Activated B cell treated with CpG ODN at 0.5 μM for 24 hours (primary cell): ENCODE measurements at regions of chr1 and their contacts with region 1.

Region 1: GRCh38 chr1:42924082-42924850 is 34.4 kb downstream of the SLC2A1 start:
- DNase-seq: peak; percentile 95
- ATAC-seq: peak; percentile 87
- H3K4me3 Mint-ChIP-seq: peak overlapping the region; percentile 91
- H3K27ac Mint-ChIP-seq: peak overlapping the region; percentile 92
- H3K4me1 Mint-ChIP-seq: peaks cover 41% of the 10 kb centered on the region
- H3K27me3 Mint-ChIP-seq: no peaks in the 10 kb centered on the region
- CTCF ChIP-seq: no peak

Region 2: DNA sequence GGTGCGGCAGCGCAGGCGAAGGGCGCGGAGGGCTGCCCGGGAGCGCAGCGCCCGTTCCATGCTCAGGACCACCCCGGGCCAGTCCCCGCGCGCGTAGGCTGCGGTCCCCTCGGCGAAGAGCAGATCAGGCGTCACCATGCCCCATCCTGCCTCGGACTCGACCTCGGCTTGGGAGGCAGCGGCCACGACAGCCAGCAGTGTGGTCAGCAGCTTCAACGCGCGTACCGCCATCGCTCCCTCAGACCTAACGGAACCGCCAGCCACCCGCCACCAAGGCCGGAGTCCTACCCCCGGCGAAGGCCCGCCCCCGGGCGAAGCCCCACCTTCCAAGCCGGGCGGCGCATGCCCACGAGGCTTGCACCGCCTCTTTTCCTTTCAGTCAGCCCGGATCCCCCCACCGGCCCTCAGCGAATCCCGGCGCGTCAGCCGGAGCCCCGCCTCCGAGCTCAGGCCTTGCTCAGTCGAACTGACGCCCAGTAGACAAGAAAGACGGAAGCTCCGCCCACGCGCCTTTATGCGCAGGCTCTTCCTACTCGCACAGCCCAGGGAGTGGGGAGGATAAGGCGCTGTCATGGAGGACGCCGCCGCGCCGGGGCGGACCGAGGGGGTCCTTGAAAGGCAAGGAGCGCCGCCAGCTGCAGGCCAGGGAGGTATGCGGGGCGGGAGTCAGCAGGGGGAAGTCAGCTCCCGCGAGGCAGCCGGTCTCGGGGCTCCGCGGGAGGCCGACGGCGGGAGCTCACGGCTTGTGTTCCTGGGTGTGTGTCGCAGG is 157.3 kb before region 1 on chr1 and contains the starts of genes C1orf50 and P3H1:
- CTCF ChIA-PET with region 1: interaction called, 4 read pairs
- POLR2A ChIA-PET with region 1: interaction called, 9 read pairs
- intact Hi-C with region 1: loop called (anchors 1 kb)
- DNase-seq: peak; percentile 99
- ATAC-seq: peak; percentile 91
- H3K4me3 Mint-ChIP-seq: no peak within 1 kb of the TSS
- H3K27ac Mint-ChIP-seq: peak within 1 kb of the TSS; percentile 93
- H3K4me1 Mint-ChIP-seq: peaks cover 33% of the 10 kb centered on the region
- H3K27me3 Mint-ChIP-seq: no peaks in the 10 kb centered on the region
- CTCF ChIP-seq: no peak
- total RNA-seq, gene C1orf50: 10.6 and 13.1 TPM in 2 replicates
- total RNA-seq, gene P3H1: 27.1 and 30.4 TPM in 2 replicates

Region 3: GRCh38 chr1:42846257-42847110 is 77.8 kb before region 1 on chr1 and contains the start of gene ZNF691:
- CTCF ChIA-PET with region 1: interaction called, 4 read pairs
- POLR2A ChIA-PET with region 1: interaction called, 12 read pairs
- intact Hi-C with region 1: loop called (anchors 5 kb)
- DNase-seq: peak; percentile 63
- ATAC-seq: peak; percentile 97
- H3K4me3 Mint-ChIP-seq: peak within 1 kb of the TSS; percentile 94
- H3K27ac Mint-ChIP-seq: peak within 1 kb of the TSS; percentile 83
- H3K4me1 Mint-ChIP-seq: peaks cover 43% of the 10 kb centered on the region
- H3K27me3 Mint-ChIP-seq: no peaks in the 10 kb centered on the region
- CTCF ChIP-seq: no peak
- total RNA-seq, gene ZNF691: 13.1 and 16.1 TPM in 2 replicates

Region 4: GRCh38 chr1:42936309-42937078 is 12.2 kb after region 1 on chr1:
- CTCF ChIA-PET with region 1: interaction called, 46 read pairs
- POLR2A ChIA-PET with region 1: interaction called, 442 read pairs
- intact Hi-C with region 1: loop called (anchors 1 kb)
- DNase-seq: peak; percentile 19
- ATAC-seq: no peak
- H3K4me3 Mint-ChIP-seq: peak overlapping the region; percentile 67
- H3K27ac Mint-ChIP-seq: peak overlapping the region; percentile 91
- H3K4me1 Mint-ChIP-seq: peaks cover 100% of the 10 kb centered on the region
- H3K27me3 Mint-ChIP-seq: no peaks in the 10 kb centered on the region
- CTCF ChIP-seq: no peak

Region 5: DNA sequence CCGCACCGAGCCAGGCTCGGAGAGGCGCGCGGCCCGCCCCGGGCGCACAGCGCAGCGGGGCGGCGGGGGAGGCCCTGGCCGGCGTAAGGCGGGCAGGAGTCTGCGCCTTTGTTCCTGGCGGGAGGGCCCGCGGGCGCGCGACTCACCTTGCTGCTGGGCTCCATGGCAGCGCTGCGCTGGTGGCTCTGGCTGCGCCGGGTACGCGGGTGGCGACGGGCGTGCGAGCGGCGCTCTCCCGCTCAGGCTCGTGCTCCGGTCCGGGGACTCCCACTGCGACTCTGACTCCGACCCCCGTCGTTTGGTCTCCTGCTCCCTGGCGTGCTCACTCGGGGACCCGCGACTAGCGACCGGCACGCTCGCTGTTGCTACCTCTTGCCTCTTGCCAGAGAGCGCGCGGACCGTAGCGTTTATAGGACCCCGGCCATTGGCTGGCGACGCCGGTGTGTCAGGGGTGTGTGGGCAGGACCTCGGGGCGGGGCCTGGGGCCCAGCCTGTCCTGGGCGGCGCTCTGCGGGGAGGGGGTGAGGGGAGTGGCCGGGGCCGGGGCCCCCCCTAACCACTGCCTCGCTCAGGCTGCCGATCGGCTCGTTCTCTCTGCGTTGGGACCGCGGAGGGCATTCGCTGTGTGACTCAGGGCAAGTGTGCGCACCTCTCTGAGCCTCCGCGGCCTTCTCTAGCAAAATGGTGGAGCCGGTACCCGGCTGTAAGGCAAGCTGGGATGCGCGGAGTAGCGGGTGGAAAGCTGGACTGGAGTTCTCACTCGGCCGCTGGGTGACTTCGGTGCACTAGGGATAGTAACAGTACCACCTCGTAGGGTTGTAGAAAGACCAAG is 34.4 kb after region 1 on chr1 and contains the start of gene SLC2A1:
- CTCF ChIA-PET with region 1: interaction called, 7 read pairs
- POLR2A ChIA-PET with region 1: interaction called, 442 read pairs
- intact Hi-C with region 1: loop called (anchors 1 kb)
- DNase-seq: peak; percentile 90
- ATAC-seq: peak; percentile 89
- H3K4me3 Mint-ChIP-seq: peak within 1 kb of the TSS; percentile 99
- H3K27ac Mint-ChIP-seq: peak within 1 kb of the TSS; percentile 99
- H3K4me1 Mint-ChIP-seq: peaks cover 77% of the 10 kb centered on the region
- H3K27me3 Mint-ChIP-seq: peaks cover 1% of the 10 kb centered on the region
- CTCF ChIP-seq: no peak
- total RNA-seq, gene SLC2A1: 105 and 117 TPM in 2 replicates

Region 6: DNA sequence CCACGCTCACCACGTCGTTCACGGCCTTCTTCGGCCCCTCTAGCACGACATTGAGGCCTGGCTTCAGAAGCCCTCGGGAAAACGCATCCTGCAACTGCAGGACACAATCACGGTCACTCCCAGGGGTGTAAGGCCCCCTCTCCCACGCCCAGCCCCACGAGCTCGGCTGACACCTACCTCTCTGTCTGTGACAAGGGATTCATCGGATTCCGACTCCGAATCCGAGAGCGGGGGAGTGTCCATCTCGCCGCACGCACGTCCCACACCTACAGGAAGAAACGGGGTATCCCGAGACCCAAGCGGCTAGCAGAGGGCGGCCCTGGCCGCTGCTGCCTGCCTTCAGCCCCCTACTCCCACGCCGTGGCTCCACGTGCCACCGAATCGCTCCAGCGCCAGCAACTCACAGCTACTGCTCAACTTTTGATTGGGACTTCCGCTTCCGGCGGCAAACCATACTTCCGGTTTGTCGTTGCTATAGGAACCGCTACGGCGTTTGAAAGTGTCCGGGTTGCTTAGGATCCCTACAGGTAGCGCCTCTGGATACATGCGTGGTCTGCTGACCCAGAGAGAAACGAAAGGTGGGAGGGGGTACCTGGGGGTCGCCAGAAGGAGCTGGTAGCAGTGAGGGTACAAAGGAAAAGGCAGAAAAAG is 247.7 kb after region 1 on chr1 and contains the starts of genes CFAP57 and EBNA1BP2:
- CTCF ChIA-PET with region 1: no interaction called
- POLR2A ChIA-PET with region 1: interaction called, 4 read pairs
- intact Hi-C with region 1: loop called (anchors 1 kb)
- DNase-seq: peak; percentile 84
- ATAC-seq: peak; percentile 82
- H3K4me3 Mint-ChIP-seq: peak within 1 kb of the TSS; percentile 99
- H3K27ac Mint-ChIP-seq: peak within 1 kb of the TSS; percentile 95
- H3K4me1 Mint-ChIP-seq: peaks cover 32% of the 10 kb centered on the region
- H3K27me3 Mint-ChIP-seq: peaks cover 20% of the 10 kb centered on the region
- CTCF ChIP-seq: no peak
- total RNA-seq, gene CFAP57: 0.93 TPM in 1 of 2 replicates, not detected in the other
- total RNA-seq, gene EBNA1BP2: 59.9 and 61.8 TPM in 2 replicates